ENCODE measurements at regions of chr15 and their contacts with region 1.

Region 1: GRCh38 chr15:85673326-85673725 is 121.4 kb downstream of the KLHL25 start:
- DNase-seq: no peak
- ATAC-seq: no peak
- H3K4me3 Mint-ChIP-seq: no peak overlapping the region
- H3K27ac Mint-ChIP-seq: no peak overlapping the region; the same call in 1 of the 2 replicates
- H3K4me1 Mint-ChIP-seq: no peaks in the 10 kb centered on the region
- H3K27me3 Mint-ChIP-seq: no peaks in the 10 kb centered on the region
- CTCF ChIP-seq: no peak

Region 2: GRCh38 chr15:85646538-85647091 is 26.7 kb before region 1 on chr15:
- CTCF ChIA-PET with region 1: no interaction called
- POLR2A ChIA-PET with region 1: interaction called, 13 read pairs
- DNase-seq: no peak
- ATAC-seq: no peak
- H3K4me3 Mint-ChIP-seq: no peak overlapping the region
- H3K27ac Mint-ChIP-seq: peak overlapping the region; percentile 52; the same call in 1 of the 2 replicates
- H3K4me1 Mint-ChIP-seq: peaks cover 8% of the 10 kb centered on the region
- H3K27me3 Mint-ChIP-seq: no peaks in the 10 kb centered on the region
- CTCF ChIP-seq: no peak

Region 3: DNA sequence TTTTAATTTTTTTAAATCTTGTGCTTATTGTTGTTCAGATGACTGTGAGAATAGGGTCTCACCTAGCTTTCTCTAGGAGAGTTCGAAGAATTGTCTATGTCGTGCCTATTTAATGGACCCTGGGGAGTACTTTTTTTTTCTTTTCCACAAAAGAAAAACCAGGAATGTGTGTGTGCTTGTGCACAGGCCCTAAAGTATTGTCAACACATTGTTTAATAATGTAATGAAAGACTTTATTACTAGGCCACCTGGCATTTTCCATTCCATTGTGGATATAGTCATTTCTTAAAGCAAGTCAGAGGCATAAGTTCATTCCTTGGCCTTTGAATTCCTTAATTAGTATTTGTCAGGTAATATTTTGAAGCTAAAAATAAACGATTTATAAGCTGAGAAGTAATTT is 14.5 kb before region 1 on chr15:
- CTCF ChIA-PET with region 1: no interaction called
- POLR2A ChIA-PET with region 1: no interaction called
- DNase-seq: no peak
- ATAC-seq: no peak
- H3K4me3 Mint-ChIP-seq: no peak overlapping the region
- H3K27ac Mint-ChIP-seq: no peak overlapping the region
- H3K4me1 Mint-ChIP-seq: peaks cover 6% of the 10 kb centered on the region
- H3K27me3 Mint-ChIP-seq: no peaks in the 10 kb centered on the region
- CTCF ChIP-seq: no peak

Region 4: GRCh38 chr15:85688711-85689110 is 15.4 kb after region 1 on chr15:
- CTCF ChIA-PET with region 1: no interaction called
- POLR2A ChIA-PET with region 1: no interaction called
- DNase-seq: no peak
- ATAC-seq: no peak
- H3K4me3 Mint-ChIP-seq: no peak overlapping the region
- H3K27ac Mint-ChIP-seq: no peak overlapping the region
- H3K4me1 Mint-ChIP-seq: peaks cover 24% of the 10 kb centered on the region
- H3K27me3 Mint-ChIP-seq: no peaks in the 10 kb centered on the region
- CTCF ChIP-seq: no peak